ENCODE measurements at regions of chr18 and their contacts with region 1.

Region 1: GRCh38 chr18:65901522-65901921 is 150.7 kb downstream of the CDH7 start:
- DNase-seq: no peak
- H3K4me3 ChIP-seq: no peak overlapping the region
- CTCF ChIP-seq: no peak
- POLR2A ChIP-seq: no peak

Region 2: GRCh38 chr18:65091744-65092329 is 809.7 kb before region 1 on chr18:
- intact Hi-C with region 1: no loop called
- DNase-seq: no peak
- H3K4me3 ChIP-seq: no peak overlapping the region
- CTCF ChIP-seq: no peak
- POLR2A ChIP-seq: no peak

Region 3: GRCh38 chr18:67068608-67069007 is 1167.1 kb after region 1 on chr18:
- intact Hi-C with region 1: loop called (anchors 5 kb)
- DNase-seq: no peak
- H3K4me3 ChIP-seq: no peak overlapping the region
- CTCF ChIP-seq: no peak
- POLR2A ChIP-seq: no peak

Measured in lower leg skin (tissue), 4 donors.